Endothelial cell of umbilical vein (primary cell): ENCODE measurements at regions of chr1 and their contacts with region 1.

Region 1: DNA sequence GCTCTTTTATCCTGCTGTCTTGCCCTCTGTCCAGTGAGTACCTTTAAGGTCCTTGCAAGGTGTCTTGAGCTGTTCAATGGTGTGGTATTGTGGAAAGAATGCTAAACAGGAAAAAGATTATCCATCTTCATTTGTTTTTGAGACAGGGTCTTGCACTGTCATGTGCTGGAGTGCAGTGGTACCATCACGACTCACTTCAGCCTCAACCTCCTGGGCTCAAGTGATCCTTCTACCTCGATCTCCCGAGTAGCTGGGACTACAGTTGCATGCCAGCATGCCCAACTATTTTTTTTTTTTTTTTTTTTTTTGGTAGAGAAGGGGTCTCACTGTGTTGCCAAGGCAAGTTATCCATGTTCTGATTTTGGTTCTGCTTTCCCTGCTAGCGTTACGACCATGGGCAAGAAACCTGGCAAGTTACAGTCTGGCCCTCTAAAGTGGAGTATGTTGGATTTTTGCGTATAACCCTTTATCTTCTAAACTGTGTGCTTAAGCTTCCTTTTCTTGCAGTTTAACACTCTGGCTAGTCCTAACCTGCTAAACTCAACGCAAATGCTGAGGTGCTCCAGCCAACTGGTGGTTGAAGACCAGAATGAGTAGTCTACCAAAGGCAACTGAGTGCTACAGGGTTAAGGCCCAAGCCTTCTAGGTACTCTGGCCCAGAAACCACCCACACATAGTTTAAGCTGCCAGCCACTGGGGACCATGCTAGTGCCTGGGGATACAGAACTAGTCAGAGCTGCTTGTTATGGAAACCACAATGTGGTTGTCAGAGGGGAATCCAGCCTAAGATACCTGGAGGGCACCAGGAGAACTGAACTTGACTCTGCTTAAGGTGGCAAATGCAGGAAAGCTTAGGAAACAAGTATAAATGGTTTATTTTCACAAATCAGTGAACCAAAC is 7.9 kb downstream of the RPL11 start:
- DNase-seq: no peak
- H3K4me3 ChIP-seq: no peak overlapping the region
- H3K27ac ChIP-seq: no peak overlapping the region
- H3K4me1 ChIP-seq: peaks cover 12% of the 10 kb centered on the region
- H3K27me3 ChIP-seq: no peaks in the 10 kb centered on the region
- CTCF ChIP-seq: no peak
- POLR2A ChIP-seq: no peak

Region 2: DNA sequence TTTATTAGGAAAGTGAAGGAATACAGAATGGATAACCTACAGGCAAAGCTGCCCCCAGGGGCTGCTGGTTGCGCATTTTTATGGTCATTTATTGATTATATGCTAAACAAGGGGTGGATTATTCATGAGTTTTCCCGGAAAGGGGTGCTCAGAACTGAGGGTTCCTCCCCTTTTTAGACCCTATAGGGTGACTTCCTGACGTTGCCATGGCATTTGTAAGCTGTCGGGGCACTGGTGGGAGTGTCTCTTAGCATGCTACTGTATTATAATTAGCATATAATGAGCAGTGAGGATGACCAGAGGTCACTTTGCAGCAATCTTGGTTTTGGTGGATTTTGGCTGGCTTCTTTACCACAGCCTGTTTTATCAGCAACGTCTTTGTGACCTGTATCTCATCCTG is 209.7 kb before region 1 on chr1:
- CTCF ChIA-PET with region 1: no interaction called
- POLR2A ChIA-PET with region 1: no interaction called
- dilution Hi-C with region 1: no loop called
- intact Hi-C with region 1: no loop called
- DNase-seq: no peak
- H3K4me3 ChIP-seq: no peak overlapping the region
- H3K27ac ChIP-seq: no peak overlapping the region
- H3K4me1 ChIP-seq: peaks cover 4% of the 10 kb centered on the region
- H3K27me3 ChIP-seq: peaks cover 6% of the 10 kb centered on the region in 2 experiments
- CTCF ChIP-seq: no peak
- POLR2A ChIP-seq: no peak

Region 3: DNA sequence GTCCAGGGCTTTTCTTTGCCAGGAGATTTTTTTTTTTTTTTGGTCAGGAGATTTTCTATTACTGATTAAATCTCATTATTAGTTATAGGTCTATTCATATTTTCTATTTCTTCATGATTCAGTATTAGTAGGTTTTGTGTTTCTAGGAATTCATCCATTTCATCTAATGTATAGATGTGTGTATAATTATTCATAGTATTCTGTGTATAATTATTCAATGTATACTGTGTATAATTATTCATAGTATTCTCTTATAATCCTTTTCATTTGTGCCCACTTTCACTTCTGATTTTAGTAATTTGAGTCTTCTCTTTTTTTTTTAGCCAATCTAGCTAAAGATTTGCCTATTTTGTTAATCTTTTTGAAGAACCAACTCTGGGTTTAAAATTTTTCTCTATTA is 247.8 kb after region 1 on chr1:
- CTCF ChIA-PET with region 1: no interaction called
- POLR2A ChIA-PET with region 1: no interaction called
- dilution Hi-C with region 1: no loop called
- intact Hi-C with region 1: loop called (anchors 5 kb)
- DNase-seq: no peak
- H3K4me3 ChIP-seq: no peak overlapping the region
- H3K27ac ChIP-seq: no peak overlapping the region
- H3K4me1 ChIP-seq: no peaks in the 10 kb centered on the region
- H3K27me3 ChIP-seq: peaks cover 4 to 19% of the 10 kb centered on the region in 2 experiments
- CTCF ChIP-seq: no peak
- POLR2A ChIP-seq: no peak